CD4-positive, alpha-beta T cell (primary cell): ENCODE measurements at regions of chr4 and their contacts with region 1.

Region 1: DNA sequence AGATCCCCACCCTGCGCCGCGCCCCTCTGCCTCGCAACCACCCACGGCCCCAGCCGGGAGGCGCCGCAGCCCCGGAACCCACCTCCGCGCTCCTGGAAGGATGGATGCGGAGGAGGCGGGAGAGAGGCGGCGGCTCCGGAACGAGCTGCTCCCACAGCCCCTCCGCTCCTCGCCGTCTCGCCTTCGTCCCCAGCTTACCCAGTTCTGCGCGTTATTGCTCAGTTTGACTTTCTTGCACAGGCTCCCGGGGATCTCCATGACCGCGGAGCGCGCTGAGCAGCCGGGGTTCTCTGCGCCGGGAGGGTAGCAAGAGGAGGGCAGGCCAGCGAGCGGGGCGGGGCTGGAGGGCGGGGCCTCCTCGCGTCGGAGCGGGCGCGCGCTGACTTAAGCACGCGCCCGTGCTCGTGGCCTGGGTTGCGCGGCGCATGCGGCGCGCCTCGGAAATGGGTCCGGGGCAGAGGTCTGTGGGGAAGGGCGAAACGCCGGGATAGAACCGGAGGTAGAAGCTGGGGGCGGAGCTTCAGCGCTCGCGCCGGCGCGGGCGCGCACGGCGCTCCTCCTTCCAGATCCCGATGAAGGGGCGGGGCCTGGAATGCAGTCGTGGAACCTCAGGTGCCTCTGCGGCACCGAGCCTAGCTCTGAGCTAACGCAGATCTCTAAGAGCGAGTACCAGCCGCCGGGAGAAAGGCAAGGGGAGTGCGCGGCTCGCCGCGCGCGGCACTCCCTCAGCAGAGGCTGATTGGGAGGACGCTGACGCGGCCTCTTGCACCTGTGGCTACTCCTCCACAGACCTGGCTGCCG is at the start of gene PAPSS1:
- DNase-seq: peak; percentile 89 to 99 (median 94)
- ATAC-seq: peak; percentile 86
- H3K4me3 ChIP-seq: peak within 1 kb of the TSS; percentile 89
- H3K4me3 Mint-ChIP-seq: peak within 1 kb of the TSS; percentile 88
- H3K27ac ChIP-seq: peak within 1 kb of the TSS; percentile 63 to 72
- H3K27ac Mint-ChIP-seq: peak within 1 kb of the TSS; percentile 94
- H3K4me1 ChIP-seq: peaks cover 24% of the 10 kb centered on the region
- H3K4me1 Mint-ChIP-seq: peaks cover 37% of the 10 kb centered on the region
- H3K27me3 ChIP-seq: no peaks in the 10 kb centered on the region
- H3K27me3 Mint-ChIP-seq: no peaks in the 10 kb centered on the region
- CTCF ChIP-seq: no peak
- total RNA-seq, gene PAPSS1: 5.6 to 6.6 TPM

Region 2: GRCh38 chr4:106315968-106316772 is 1404.0 kb before region 1 on chr4 and contains the starts of genes AIMP1 and TBCK:
- CTCF ChIA-PET with region 1: no interaction called
- POLR2A ChIA-PET with region 1: interaction called, 11 read pairs
- intact Hi-C with region 1: loop called in 1 of 2 experiments (anchors 5 kb)
- DNase-seq: peak; percentile 78 to 96 (median 84)
- ATAC-seq: peak; percentile 84
- H3K4me3 ChIP-seq: peak within 1 kb of the TSS; percentile 81
- H3K4me3 Mint-ChIP-seq: no peak within 1 kb of the TSS
- H3K27ac ChIP-seq: peak within 1 kb of the TSS; percentile 95 to 96
- H3K27ac Mint-ChIP-seq: no peak within 1 kb of the TSS
- H3K4me1 ChIP-seq: peaks cover 18% of the 10 kb centered on the region
- H3K4me1 Mint-ChIP-seq: peaks cover 26% of the 10 kb centered on the region
- H3K27me3 ChIP-seq: no peaks in the 10 kb centered on the region
- H3K27me3 Mint-ChIP-seq: no peaks in the 10 kb centered on the region
- CTCF ChIP-seq: no peak
- total RNA-seq, gene AIMP1: 75.4 to 77.8 TPM
- total RNA-seq, gene TBCK: 23.5 to 29.0 TPM

Region 3: DNA sequence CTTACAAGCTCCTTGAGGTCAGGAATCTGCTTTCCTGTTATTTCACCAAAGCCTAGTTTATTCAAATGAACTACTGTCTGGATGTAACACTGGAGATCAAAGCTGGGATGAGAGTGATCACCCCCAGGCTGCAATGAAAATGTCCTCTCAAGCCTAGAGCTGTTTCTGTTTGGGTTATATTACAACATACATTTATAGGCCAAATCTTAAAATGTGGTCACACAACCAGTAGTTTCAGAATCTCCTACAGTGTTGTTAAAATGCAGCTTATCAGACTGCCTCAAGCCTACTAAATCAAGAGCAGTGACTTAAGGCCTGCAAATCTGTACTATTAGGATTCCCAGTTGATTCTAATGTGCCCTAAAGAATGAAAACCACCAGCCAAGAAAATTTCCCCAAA is 207.6 kb before region 1 on chr4:
- CTCF ChIA-PET with region 1: no interaction called
- POLR2A ChIA-PET with region 1: no interaction called
- intact Hi-C with region 1: no loop called
- DNase-seq: no peak
- ATAC-seq: no peak
- H3K4me3 ChIP-seq: no peak overlapping the region
- H3K4me3 Mint-ChIP-seq: no peak overlapping the region
- H3K27ac ChIP-seq: no peak overlapping the region
- H3K27ac Mint-ChIP-seq: no peak overlapping the region
- H3K4me1 ChIP-seq: no peaks in the 10 kb centered on the region
- H3K4me1 Mint-ChIP-seq: no peaks in the 10 kb centered on the region
- H3K27me3 ChIP-seq: no peaks in the 10 kb centered on the region
- H3K27me3 Mint-ChIP-seq: peaks cover 6% of the 10 kb centered on the region
- CTCF ChIP-seq: no peak

Region 4: DNA sequence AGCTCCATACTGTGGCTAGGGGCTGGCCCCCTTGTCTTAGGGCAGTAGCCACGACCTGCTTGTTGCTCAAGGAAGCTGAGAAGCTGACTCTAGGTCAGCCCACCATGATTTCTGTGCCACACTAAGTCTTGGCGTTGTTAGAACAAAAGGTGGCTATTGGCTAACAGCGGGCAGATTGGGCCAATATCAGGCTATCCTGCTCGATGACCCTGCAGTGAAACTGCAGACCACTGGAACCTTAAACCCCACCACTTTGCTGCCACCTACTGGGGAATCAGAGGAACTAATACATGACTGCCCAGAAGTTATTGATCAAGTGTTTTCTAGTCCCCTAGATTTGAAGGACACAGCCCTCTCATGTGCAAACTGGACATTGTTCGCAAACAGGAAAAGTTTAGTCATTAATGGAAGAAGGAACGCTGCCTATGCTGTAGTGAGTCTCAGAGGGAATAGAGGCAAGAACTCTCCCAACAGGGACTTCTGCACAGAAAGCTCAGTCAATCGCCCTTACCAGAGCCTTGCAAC is 16.9 kb after region 1 on chr4:
- CTCF ChIA-PET with region 1: no interaction called
- POLR2A ChIA-PET with region 1: interaction called, 10 read pairs
- intact Hi-C with region 1: no loop called
- DNase-seq: peak in 12 of 14 experiments; percentile 14 to 71 (median 19)
- ATAC-seq: no peak
- H3K4me3 ChIP-seq: no peak overlapping the region
- H3K4me3 Mint-ChIP-seq: no peak overlapping the region
- H3K27ac ChIP-seq: no peak overlapping the region
- H3K27ac Mint-ChIP-seq: no peak overlapping the region
- H3K4me1 ChIP-seq: peaks cover 4% of the 10 kb centered on the region
- H3K4me1 Mint-ChIP-seq: no peaks in the 10 kb centered on the region
- H3K27me3 ChIP-seq: no peaks in the 10 kb centered on the region
- H3K27me3 Mint-ChIP-seq: no peaks in the 10 kb centered on the region
- CTCF ChIP-seq: peak; percentile 88

Region 5: GRCh38 chr4:107843391-107843790 is 123.3 kb after region 1 on chr4:
- CTCF ChIA-PET with region 1: no interaction called
- POLR2A ChIA-PET with region 1: no interaction called
- intact Hi-C with region 1: no loop called
- DNase-seq: no peak
- ATAC-seq: no peak
- H3K4me3 ChIP-seq: no peak overlapping the region
- H3K4me3 Mint-ChIP-seq: no peak overlapping the region
- H3K27ac ChIP-seq: no peak overlapping the region
- H3K27ac Mint-ChIP-seq: no peak overlapping the region
- H3K4me1 ChIP-seq: no peaks in the 10 kb centered on the region
- H3K4me1 Mint-ChIP-seq: no peaks in the 10 kb centered on the region
- H3K27me3 ChIP-seq: peaks cover 0 to 3% of the 10 kb centered on the region in 2 experiments
- H3K27me3 Mint-ChIP-seq: peaks cover 20% of the 10 kb centered on the region
- CTCF ChIP-seq: no peak

Region 6: GRCh38 chr4:107930821-107931774 is 211.0 kb after region 1 on chr4 and contains the start of gene CYP2U1:
- CTCF ChIA-PET with region 1: no interaction called
- POLR2A ChIA-PET with region 1: interaction called, 21 read pairs
- intact Hi-C with region 1: loop called in 1 of 2 experiments (anchors 2 kb)
- DNase-seq: peak; percentile 54 to 90 (median 74)
- ATAC-seq: peak; percentile 93
- H3K4me3 ChIP-seq: peak within 1 kb of the TSS; percentile 81
- H3K4me3 Mint-ChIP-seq: peak within 1 kb of the TSS; percentile 96
- H3K27ac ChIP-seq: peak within 1 kb of the TSS; percentile 2 to 4
- H3K27ac Mint-ChIP-seq: peak within 1 kb of the TSS; percentile 89
- H3K4me1 ChIP-seq: peaks cover 16% of the 10 kb centered on the region
- H3K4me1 Mint-ChIP-seq: peaks cover 50% of the 10 kb centered on the region
- H3K27me3 ChIP-seq: no peaks in the 10 kb centered on the region
- H3K27me3 Mint-ChIP-seq: no peaks in the 10 kb centered on the region
- CTCF ChIP-seq: no peak
- total RNA-seq, gene CYP2U1: 2.9 to 4.0 TPM

Region 7: GRCh38 chr4:107989537-107990386 is 269.6 kb after region 1 on chr4 and contains the start of gene HADH:
- CTCF ChIA-PET with region 1: no interaction called
- POLR2A ChIA-PET with region 1: interaction called, 6 read pairs
- intact Hi-C with region 1: loop called (anchors 2 kb)
- DNase-seq: peak; percentile 85 to 98 (median 94)
- ATAC-seq: peak; percentile 97
- H3K4me3 ChIP-seq: peak within 1 kb of the TSS; percentile 81
- H3K4me3 Mint-ChIP-seq: peak within 1 kb of the TSS; percentile 92
- H3K27ac ChIP-seq: peak within 1 kb of the TSS; percentile 37 to 81
- H3K27ac Mint-ChIP-seq: peak within 1 kb of the TSS; percentile 88
- H3K4me1 ChIP-seq: peaks cover 14% of the 10 kb centered on the region
- H3K4me1 Mint-ChIP-seq: peaks cover 83% of the 10 kb centered on the region
- H3K27me3 ChIP-seq: no peaks in the 10 kb centered on the region
- H3K27me3 Mint-ChIP-seq: no peaks in the 10 kb centered on the region
- CTCF ChIP-seq: no peak
- total RNA-seq, gene HADH: 16.1 to 16.3 TPM

Region 8: GRCh38 chr4:108620101-108620932 is 900.2 kb after region 1 on chr4 and contains the start of gene RPL34:
- CTCF ChIA-PET with region 1: no interaction called
- POLR2A ChIA-PET with region 1: interaction called, 5 read pairs
- intact Hi-C with region 1: loop called in 1 of 2 experiments (anchors 5 kb)
- DNase-seq: peak; percentile 93 to 99 (median 97)
- ATAC-seq: peak; percentile 98
- H3K4me3 ChIP-seq: peak within 1 kb of the TSS; percentile 78
- H3K4me3 Mint-ChIP-seq: peak within 1 kb of the TSS; percentile 97
- H3K27ac ChIP-seq: peak within 1 kb of the TSS; percentile 85
- H3K27ac Mint-ChIP-seq: peak within 1 kb of the TSS; percentile 99
- H3K4me1 ChIP-seq: peaks cover 36% of the 10 kb centered on the region
- H3K4me1 Mint-ChIP-seq: peaks cover 65% of the 10 kb centered on the region
- H3K27me3 ChIP-seq: no peaks in the 10 kb centered on the region
- H3K27me3 Mint-ChIP-seq: no peaks in the 10 kb centered on the region
- CTCF ChIP-seq: no peak
- total RNA-seq, gene RPL34: 3,283 to 3,551 TPM

Region 9: DNA sequence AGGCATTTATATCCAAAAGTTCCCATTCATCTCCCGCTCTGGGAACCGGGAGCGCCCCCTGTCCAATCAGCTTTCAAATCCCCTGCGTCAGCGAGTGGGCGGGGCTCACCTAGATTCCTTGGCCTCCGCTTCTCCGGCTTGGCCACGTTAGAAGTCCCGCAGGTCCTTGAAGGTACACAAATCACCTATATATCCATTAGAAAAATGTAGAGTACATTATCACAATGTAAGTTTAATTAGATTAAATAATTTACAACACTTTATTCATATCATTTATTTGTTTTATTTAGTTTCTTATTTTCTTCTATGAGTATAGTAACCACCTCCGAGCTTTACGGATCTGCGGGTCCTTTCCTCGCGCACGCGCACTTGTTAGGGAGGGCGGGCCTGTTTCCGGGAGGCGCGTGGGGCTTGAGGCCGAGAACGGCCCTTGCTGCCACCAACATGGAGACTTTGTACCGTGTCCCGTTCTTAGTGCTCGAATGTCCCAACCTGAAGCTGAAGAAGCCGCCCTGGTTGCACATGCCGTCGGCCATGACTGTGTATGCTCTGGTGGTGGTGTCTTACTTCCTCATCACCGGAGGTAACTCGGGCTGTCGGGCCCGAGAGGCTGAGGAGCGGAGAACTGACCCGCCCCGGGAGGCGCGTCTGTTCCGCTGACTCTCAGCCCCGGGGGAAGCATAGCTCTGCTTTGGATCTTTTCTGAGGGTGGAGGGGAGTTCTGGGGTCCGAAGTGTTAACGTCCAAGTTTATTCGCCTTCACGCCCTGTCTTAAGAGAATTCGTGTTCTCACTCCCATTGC is 930.3 kb after region 1 on chr4 and contains the start of gene OSTC:
- CTCF ChIA-PET with region 1: no interaction called
- POLR2A ChIA-PET with region 1: interaction called, 3 read pairs
- intact Hi-C with region 1: loop called in 1 of 2 experiments (anchors 1 kb)
- DNase-seq: peak; percentile 86 to 96 (median 89)
- ATAC-seq: peak; percentile 89
- H3K4me3 ChIP-seq: peak within 1 kb of the TSS; percentile 85
- H3K4me3 Mint-ChIP-seq: peak within 1 kb of the TSS; percentile 93
- H3K27ac ChIP-seq: peak within 1 kb of the TSS; percentile 84
- H3K27ac Mint-ChIP-seq: peak within 1 kb of the TSS; percentile 99
- H3K4me1 ChIP-seq: peaks cover 15% of the 10 kb centered on the region
- H3K4me1 Mint-ChIP-seq: peaks cover 50% of the 10 kb centered on the region
- H3K27me3 ChIP-seq: no peaks in the 10 kb centered on the region
- H3K27me3 Mint-ChIP-seq: no peaks in the 10 kb centered on the region
- CTCF ChIP-seq: peak; percentile 21
- total RNA-seq, gene OSTC: 21.8 to 25.5 TPM